Calu3 (cell line): ENCODE measurements at regions of chr1 and their contacts with region 1.

Region 1: DNA sequence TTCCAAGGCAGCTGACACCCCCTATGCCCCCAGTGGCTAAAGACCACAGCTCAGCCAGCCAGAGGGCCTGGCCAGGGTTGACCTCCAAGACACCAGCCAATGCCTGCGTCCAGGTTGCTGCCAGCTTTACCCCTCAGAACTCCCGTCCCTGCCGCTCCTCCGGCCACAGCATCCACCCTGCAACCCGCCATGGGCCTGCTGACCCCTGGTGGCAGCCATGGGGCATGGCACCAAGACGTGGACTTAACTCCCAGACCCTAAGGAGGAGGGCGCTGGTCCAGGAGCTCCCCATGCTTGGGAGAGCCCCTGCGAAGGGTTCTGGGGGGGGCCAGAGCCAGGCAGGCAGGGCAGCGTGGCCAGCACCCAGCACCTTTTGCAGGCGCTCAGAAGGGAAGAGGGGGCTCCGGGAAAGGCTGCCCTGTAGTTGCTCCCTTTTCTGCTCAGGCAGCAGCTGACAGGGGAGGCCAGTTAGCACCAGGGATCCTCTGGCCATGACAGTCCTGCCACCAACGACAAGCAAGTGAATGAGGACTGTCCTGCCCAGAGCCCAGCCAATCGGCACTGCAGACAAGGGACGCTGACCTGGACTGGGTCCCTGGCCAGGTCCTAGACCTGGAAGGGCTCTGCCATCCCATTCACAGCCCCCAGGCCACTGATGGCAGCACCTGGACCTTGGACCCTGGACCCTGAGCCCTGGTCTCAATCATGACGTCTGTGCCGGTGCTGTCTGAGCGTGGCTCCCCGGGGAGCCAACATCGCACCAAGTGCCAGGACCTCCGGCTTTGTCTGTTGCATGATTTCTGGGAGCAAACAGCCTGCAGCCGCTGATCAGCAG is 246.2 kb downstream of the NPHP4 start:
- DNase-seq: peak; percentile 74
- H3K4me3 Mint-ChIP-seq: no peak overlapping the region
- H3K27ac Mint-ChIP-seq: no peak overlapping the region
- H3K4me1 Mint-ChIP-seq: no peaks in the 10 kb centered on the region
- H3K27me3 Mint-ChIP-seq: peaks cover 57% of the 10 kb centered on the region
- CTCF ChIP-seq: peak; percentile 73

Region 2: DNA sequence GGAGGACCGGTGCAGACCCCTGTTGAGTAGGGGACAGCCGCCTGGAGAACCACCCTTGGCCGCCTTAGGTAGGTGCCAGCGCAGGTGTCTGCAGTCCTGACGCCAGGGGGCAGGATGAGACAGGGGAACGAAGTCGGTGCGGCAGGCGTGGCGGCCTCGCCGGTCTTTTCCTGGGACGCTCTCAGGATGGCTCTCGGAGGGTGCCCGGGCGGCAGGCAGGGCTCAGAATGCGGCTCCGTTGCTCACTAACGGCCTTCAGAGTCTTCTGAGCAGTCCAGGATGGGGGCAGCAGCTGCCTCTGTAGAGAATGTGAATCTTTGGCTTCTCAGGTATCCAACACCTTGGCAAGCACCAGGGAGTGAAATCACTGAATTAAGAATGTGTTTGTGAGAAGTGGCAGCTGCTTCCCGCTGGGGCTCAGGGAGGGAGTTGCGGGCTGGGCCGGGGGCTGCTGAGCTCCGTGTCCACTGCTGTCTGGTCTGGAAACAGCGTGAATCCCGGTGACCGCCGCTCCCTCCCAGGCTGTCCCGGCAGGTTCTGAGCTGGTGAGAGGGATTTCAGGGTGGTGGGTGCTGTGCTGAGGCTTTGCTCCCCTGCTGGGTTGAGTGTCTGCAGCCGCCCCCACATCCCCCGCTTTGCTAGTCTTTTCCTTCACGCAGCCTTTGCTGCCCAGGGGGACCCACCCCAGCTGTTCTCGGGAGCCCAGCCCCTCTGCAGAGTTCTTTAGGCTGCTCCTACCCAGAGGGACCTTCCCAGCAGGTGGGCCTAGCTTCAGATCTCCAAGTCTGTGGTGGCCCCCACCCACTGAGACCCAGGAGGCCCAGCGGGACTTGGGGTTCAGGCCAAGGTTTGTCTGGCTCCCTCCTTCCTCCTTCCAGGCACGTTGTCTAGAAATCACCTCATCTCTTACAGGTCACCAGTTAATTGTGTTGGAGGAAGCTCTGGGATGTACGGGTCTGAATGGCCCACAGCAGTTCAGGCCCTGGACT is 1834.8 kb before region 1 on chr1:
- CTCF ChIA-PET with region 1: interaction called, 4 read pairs
- intact Hi-C with region 1: loop called (anchors 5 kb)
- DNase-seq: peak; percentile 85
- H3K4me3 Mint-ChIP-seq: no peak overlapping the region
- H3K27ac Mint-ChIP-seq: no peak overlapping the region
- H3K4me1 Mint-ChIP-seq: no peaks in the 10 kb centered on the region
- H3K27me3 Mint-ChIP-seq: peaks cover 8% of the 10 kb centered on the region
- CTCF ChIP-seq: peak; percentile 71